Left cardiac atrium (tissue), 4 donors: ENCODE measurements at regions of chr9 and their contacts with region 1.

Region 1: DNA sequence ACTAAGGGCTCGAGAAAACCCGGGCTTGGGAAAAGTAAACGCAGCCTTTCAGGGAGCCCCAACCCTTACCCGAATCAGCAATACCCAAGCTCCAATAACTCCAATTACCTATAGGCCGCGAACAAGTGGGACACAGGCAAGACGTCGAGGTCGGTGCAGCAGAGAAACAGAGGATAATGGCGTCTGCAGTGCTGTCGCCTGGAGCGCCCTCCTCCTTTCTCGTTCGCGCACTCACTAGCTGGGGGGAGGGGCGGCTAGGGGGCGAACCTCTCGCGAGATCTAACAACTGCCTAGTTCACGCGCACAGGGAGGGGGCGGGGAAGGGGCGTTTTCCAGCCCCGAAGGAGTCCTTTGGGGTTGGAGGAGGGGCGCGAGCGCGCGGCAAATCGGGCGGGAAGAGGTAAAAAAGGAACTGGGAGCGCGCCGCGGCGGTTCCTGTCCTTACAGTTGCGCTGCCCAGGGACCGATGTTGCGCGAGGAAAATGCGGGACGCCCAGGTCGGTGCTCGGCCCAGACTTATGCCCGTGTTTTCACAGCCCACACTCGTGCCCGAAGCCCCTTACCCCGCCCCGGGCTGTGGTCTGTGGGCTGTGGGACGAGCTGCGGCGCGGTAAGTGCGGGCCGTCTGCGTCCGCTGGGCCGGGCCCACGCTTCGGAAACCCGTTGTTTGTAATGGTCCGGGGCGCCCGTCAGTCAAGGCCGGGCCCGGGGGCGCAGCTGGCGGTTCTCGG is at the start of gene RMI1:
- DNase-seq: peak; percentile 100
- ATAC-seq: peak; percentile 93 to 95
- total RNA-seq, gene RMI1: 3.8 to 4.0 TPM

Region 2: DNA sequence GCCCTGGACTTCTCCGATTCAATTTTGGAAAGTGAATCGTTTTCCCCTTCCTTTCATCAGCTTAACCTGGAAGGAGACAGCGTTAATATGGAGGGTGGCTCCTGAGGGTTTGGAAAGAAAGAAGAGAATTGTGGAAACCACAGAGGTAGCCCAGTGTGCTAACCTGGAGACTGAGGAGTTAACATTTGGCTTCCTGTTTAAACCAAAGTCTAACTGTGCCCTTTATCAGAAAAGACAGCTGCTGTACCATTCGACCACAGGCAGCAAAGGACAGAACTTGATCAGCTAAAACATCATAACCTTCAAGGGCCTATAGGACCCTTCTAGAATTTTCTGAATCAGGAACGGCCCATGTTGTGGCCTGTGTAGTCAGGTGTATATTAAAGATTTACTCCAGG is 356.9 kb before region 1 on chr9:
- intact Hi-C with region 1: no loop called
- DNase-seq: no peak
- ATAC-seq: peak; percentile 7 to 13

Region 3: GRCh38 chr9:83920927-83921707 is 59.4 kb before region 1 on chr9 and contains the start of gene KIF27:
- intact Hi-C with region 1: loop called in 1 of 2 experiments (anchors 5 kb)
- DNase-seq: peak; percentile 99
- ATAC-seq: peak; percentile 98 to 99
- total RNA-seq, gene KIF27: 4.5 to 4.8 TPM

Region 4: GRCh38 chr9:84002344-84002743 is 21.8 kb after region 1 on chr9:
- intact Hi-C with region 1: no loop called
- DNase-seq: no peak
- ATAC-seq: peak in 1 of 2 donors; percentile 24

Region 5: GRCh38 chr9:84170521-84171141 is 190.1 kb after region 1 on chr9:
- intact Hi-C with region 1: loop called in 1 of 2 experiments (anchors 5 kb)
- DNase-seq: peak; percentile 82
- ATAC-seq: peak; percentile 97